Prostate gland (tissue), 2 donors: ENCODE measurements at regions of chr11 and their contacts with region 1.

Region 1: GRCh38 chr11:116787786-116788486 is at the start of gene ZPR1:
- DNase-seq: peak; percentile 76
- H3K4me3 ChIP-seq: peak within 1 kb of the TSS; percentile 79 to 89
- H3K27ac ChIP-seq: peak within 1 kb of the TSS; percentile 73 to 83
- H3K4me1 ChIP-seq: peaks cover 3% of the 10 kb centered on the region
- H3K27me3 ChIP-seq: no peaks in the 10 kb centered on the region
- CTCF ChIP-seq: peak in 2 of 4 experiments; percentile 27 to 33
- POLR2A ChIP-seq: peak; percentile 67
- total RNA-seq, gene ZPR1: 24.6 to 27.6 TPM

Region 2: DNA sequence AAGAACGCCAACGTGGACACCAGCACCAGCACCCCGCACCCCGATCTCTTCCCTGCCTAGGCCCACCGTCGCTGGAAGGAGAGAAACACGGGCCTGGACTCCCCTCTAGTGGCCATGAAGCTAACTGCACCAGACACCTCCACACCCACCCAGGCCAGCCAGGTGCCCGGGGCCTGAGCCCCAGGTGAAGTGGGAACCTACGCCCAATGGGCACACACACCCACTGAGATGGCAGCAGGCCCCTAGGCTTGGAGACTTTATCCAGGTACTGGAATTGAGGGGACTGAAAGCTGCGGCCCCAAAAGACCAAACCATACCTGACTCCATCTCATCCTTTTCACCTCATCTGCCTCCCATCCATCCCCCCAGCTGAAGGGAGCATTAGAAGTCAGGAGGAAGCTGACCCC is 96.2 kb before region 1 on chr11:
- intact Hi-C with region 1: no loop called
- DNase-seq: peak; percentile 16
- H3K4me3 ChIP-seq: no peak overlapping the region
- H3K27ac ChIP-seq: no peak overlapping the region
- H3K4me1 ChIP-seq: no peaks in the 10 kb centered on the region
- H3K27me3 ChIP-seq: no peaks in the 10 kb centered on the region
- CTCF ChIP-seq: peak; percentile 62 to 82 (median 66)
- POLR2A ChIP-seq: no peak

Region 3: DNA sequence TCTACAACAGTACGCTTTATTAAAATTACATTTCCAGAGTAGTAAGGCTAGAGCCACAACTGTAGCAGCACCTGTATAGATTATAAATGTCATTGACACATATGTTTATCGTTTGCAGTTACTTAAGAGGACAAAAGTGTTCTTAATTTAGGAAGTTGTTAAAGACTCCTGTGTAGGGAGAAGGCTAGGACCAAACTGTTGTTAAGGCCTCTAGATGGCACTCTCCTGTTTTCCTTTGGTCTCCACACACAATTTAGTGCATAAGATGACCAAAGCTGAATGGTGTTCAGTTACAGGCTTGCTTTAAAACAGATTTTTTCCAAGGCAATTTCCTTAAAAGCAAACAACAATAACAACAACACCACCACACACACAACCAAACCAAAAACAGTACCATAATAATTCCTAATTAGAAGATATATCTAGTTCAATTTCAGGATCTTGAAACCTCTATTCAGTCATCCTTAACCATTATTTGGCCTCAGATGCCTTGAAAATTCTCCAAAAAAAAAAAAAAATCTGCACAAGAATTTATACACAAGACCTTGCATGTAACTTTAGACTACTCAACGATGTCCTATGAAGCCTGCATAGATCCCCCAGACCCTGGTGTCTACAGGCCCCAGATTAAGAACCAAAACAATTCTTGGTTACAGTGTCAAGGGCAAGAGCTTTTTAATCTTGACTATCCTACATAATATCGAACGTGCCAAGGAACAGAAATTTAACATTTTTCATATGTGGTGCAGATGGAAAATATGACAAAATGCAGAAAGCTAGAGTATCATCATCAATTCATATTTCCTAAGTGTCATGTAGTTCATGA is 92.1 kb after region 1 on chr11:
- intact Hi-C with region 1: loop called (anchors 10 kb)
- DNase-seq: peak; percentile 26
- H3K4me3 ChIP-seq: no peak overlapping the region
- H3K27ac ChIP-seq: no peak overlapping the region
- H3K4me1 ChIP-seq: no peaks in the 10 kb centered on the region
- H3K27me3 ChIP-seq: no peaks in the 10 kb centered on the region
- CTCF ChIP-seq: peak in 3 of 4 experiments; percentile 57 to 67 (median 62)
- POLR2A ChIP-seq: no peak

Region 4: GRCh38 chr11:117097389-117098268 is 309.7 kb after region 1 on chr11:
- intact Hi-C with region 1: loop called (anchors 5 kb)
- DNase-seq: peak; percentile 28
- H3K4me3 ChIP-seq: peak overlapping the region; percentile 88 to 97
- H3K27ac ChIP-seq: peak overlapping the region; percentile 91 to 96
- H3K4me1 ChIP-seq: no peaks in the 10 kb centered on the region
- H3K27me3 ChIP-seq: no peaks in the 10 kb centered on the region
- CTCF ChIP-seq: no peak
- POLR2A ChIP-seq: no peak

Region 5: DNA sequence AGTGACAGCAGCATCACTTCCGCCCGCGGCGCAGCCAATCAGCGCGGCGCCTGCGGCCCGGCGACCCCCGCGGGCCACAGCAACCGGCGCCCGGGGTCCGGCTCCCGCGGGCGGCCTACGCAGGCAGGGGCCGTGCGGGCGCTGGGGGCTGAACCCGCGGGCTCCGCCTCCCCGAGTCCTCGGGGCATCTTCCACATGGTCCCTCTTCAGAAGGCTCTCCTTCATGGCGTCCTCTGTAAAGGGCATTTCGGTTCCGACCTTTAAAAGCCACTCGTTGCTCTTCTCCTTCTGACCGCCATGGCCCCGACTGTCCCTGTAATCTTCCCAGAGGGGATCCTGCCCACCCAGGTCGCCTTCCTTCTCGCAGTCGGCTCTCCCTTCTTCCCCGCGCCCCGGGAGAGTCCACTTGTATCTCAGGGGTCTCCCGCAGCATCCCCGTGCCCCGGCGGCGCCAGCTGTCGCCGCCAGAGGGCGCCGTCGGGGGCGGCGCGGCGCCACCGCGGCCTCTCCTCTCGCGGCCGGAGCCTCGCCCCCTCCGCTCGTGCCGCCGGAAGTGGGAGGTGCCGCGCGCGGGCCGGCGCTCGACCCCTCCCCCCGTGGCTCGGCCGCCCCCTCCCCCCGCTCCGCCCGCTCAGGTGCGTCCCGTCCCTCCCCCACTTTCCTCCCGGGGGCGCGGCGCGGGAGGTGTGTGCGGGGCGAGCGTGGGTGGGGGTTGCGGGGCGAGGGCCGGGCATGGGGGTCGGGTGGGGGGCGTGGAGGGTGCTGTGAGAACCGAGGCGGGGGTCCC is 444.3 kb after region 1 on chr11 and contains the start of gene RNF214:
- intact Hi-C with region 1: loop called (anchors 5 kb)
- DNase-seq: peak; percentile 67
- H3K4me3 ChIP-seq: peak within 1 kb of the TSS; percentile 69 to 80
- H3K27ac ChIP-seq: peak within 1 kb of the TSS; percentile 88 to 91
- H3K4me1 ChIP-seq: no peaks in the 10 kb centered on the region
- H3K27me3 ChIP-seq: no peaks in the 10 kb centered on the region
- CTCF ChIP-seq: peak; percentile 91 to 99 (median 98)
- POLR2A ChIP-seq: peak; percentile 5
- total RNA-seq, gene RNF214: 9.4 to 24.8 TPM